OCI-LY7 (cell line): ENCODE measurements at regions of chr7 and their contacts with region 1.

Region 1: DNA sequence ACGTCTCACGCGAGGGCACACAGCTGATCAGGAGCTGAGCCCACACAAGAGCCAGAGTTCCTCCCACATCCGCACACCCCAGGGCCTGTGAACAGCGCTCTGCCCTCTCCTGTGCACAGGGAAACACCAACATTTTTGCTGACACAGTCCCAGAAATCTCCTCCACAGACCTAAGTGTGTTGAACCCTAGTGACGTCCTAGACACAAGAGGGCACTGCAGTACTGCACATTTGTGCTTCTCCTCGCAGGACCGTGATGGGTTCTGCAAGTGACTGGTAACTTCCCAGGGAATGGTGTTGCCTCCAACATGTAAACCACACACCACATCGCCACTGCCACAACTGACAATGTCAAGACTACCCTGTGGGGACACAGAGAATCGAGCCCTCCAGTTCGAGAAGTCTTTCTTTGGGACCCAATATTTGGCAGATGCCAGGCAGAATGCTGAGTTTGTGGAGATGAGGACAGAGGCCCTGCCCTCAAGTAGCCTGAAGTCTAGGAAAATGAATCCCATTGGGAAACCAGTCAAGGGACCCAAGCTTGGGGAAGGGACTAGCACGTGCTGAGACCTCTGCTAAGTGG is 170.3 kb downstream of the PAXIP1 start:
- DNase-seq: peak; percentile 53
- H3K4me3 ChIP-seq: no peak overlapping the region
- H3K27ac ChIP-seq: no peak overlapping the region
- H3K4me1 ChIP-seq: peaks cover 29% of the 10 kb centered on the region
- CTCF ChIP-seq: peak; percentile 60

Region 2: DNA sequence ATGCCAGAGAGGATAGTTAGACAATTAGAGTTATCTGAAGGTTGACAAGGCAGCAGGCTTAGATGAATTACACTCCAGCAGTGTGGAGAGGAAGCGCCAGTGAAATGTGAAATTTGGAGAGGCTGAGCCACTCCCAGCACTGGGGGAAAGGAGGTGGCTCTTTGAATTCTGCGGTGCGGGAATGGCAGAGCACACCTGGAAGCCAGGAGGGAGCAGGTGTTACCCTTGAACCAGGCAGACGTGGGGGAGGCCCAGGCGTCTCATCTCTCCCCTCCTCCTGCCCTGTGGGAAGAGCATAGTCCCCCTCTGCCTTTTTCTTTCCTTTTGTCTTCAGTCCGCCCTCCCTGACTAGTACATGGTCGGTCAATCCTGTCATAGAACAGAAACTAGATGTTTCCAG is 577.3 kb before region 1 on chr7:
- CTCF ChIA-PET with region 1: no interaction called
- POLR2A ChIA-PET with region 1: no interaction called
- intact Hi-C with region 1: no loop called
- DNase-seq: no peak
- H3K4me3 ChIP-seq: no peak overlapping the region
- H3K27ac ChIP-seq: no peak overlapping the region
- H3K4me1 ChIP-seq: no peaks in the 10 kb centered on the region
- CTCF ChIP-seq: no peak

Region 3: DNA sequence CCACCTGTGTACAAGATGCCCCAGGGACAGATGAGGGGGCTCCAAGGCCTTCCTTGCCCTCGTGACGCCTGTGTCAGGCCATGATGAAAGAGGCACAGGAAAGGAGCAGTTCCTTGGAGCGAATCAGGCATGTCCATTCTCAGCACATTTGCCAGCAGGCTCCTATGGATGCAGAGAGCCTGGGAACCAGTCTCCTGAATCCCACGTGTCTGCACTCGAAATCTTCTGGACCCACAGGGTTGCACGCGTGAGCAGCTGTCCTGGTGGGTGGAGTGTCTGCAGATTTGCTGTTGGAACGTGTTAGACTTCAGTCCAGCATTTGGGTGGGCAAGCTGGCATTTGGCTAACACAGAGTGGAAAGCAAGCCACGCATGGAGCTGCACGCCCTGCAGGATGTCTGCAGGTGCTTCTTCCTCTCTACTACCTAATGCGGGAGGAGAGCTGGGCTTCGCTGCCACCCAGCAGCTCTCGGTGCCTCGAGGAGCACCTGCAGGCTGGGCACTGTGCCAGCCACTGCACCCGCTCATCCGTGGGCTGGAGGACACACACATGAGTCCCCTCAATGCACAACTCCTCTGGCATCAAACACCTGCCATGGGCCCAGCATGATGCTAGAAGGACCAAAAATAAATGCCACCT is 29.6 kb after region 1 on chr7:
- CTCF ChIA-PET with region 1: no interaction called
- POLR2A ChIA-PET with region 1: interaction called, 4 read pairs
- intact Hi-C with region 1: loop called (anchors 2 kb)
- DNase-seq: peak; percentile 18
- H3K4me3 ChIP-seq: no peak overlapping the region
- H3K27ac ChIP-seq: no peak overlapping the region
- H3K4me1 ChIP-seq: no peaks in the 10 kb centered on the region
- CTCF ChIP-seq: no peak

Region 4: DNA sequence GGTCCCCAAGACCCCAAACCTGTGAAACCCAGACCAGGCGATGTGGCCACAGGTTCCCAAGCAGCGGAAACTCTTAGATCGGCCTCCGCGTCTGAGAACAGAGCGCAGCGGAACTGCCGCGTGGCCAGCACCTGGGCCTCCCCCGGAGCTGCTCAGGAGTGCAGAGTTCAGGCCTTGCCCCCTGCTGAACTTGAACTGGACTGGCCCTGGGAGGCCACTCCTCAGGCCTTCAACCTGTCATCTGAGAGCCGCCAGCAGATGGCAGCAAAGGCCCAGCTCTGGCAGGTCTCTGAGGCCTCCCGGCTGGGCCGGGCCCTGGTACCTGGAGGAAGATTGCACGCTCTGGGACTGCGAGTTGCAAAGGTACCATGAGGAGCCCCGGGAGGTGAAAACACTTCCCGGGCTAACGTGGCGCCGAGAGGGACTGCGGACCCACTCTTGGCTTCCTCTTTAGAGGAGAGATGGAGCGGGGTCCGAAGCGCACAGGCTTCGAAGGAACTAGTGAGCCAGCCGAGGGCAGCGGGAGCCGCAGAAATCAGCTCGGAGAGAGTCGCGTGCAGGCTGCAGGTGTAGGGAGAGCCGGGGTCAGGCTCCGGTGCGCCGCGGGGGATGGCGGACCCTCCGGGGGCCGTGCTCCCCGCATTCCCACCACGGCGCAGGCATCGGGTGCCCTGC is 81.1 kb after region 1 on chr7:
- CTCF ChIA-PET with region 1: no interaction called
- POLR2A ChIA-PET with region 1: interaction called, 3 read pairs
- intact Hi-C with region 1: loop called (anchors 1 kb)
- DNase-seq: peak; percentile 67
- H3K4me3 ChIP-seq: no peak overlapping the region
- H3K27ac ChIP-seq: no peak overlapping the region
- H3K4me1 ChIP-seq: no peaks in the 10 kb centered on the region
- CTCF ChIP-seq: peak; percentile 85

Region 5: DNA sequence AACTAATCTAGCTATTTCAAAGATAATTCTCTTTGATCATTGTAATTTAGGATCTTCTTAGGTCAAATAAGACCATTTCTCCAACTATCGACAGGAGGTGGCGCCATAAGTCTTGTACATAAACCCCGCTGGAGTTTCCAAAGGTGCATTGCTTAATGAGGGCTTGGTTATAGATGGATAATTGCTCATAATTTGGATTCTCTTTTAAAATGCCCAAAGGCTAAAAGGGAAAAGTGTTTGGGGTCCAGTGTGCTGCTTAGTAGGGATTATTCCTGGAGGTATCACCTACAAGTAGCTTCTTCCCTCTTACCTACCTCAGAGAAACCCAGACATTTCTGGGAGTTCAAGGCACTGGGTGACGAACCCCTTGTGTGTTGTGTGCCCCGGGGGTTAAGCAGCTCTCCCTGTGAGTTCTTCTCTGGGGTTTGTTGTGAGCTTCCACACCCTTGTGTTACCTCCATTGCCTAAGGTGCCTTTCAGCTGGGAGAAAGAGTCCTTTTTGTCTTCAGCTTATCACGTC is 95.0 kb after region 1 on chr7:
- CTCF ChIA-PET with region 1: no interaction called
- POLR2A ChIA-PET with region 1: interaction called, 3 read pairs
- intact Hi-C with region 1: loop called (anchors 2 kb)
- DNase-seq: peak; percentile 91
- H3K4me3 ChIP-seq: peak overlapping the region; percentile 76
- H3K27ac ChIP-seq: peak overlapping the region; percentile 33
- H3K4me1 ChIP-seq: peaks cover 10% of the 10 kb centered on the region
- CTCF ChIP-seq: peak; percentile 94

Region 6: DNA sequence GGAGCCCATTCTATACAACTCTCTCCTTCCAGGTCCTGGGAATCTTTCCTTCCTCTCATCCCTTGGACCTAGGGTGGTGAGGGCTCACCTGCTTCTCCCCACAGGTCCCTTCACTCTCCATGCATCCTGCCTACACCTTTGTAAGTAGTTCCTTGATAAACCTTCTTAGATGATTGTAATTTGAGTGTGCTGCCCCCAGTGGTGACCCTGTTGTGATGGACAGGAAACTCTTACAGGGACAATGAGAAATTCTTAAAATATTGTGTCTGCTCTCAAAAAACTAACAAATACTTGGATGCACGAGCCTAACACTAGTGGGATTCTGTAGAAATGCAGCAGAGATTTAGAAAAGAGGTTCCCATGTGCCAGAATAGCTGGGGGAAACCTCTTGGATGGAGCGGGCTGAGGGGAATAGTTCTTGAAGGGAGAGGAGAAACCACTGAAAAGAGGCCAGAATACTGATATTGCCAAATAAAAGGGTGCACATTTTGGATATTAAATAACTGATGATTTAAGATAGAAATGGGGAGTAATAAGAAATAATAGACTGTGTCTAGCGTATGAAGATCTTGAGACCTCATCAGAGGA is 177.0 kb after region 1 on chr7:
- CTCF ChIA-PET with region 1: no interaction called
- POLR2A ChIA-PET with region 1: no interaction called
- intact Hi-C with region 1: loop called (anchors 5 kb)
- DNase-seq: peak; percentile 47
- H3K4me3 ChIP-seq: no peak overlapping the region
- H3K27ac ChIP-seq: no peak overlapping the region
- H3K4me1 ChIP-seq: peaks cover 8% of the 10 kb centered on the region
- CTCF ChIP-seq: peak; percentile 82

Region 7: DNA sequence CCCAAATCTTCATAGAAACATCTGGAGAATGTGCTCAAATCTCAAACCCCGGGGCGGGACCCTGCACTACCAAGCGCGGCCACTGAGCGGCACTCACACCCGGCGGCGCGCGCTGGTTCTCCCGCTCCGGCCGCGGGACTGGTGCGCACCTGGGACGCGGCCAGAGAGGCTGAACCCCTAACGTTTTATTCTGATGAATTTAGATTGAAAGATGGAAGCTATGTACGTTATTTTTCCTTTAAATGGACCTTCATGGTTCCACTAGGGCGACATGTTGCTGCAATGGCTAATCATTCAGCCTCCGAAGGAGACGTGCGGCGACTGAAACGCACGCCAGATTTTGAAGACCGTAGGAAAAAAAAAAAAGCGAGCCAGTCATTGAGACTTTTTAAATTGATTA is 358.0 kb after region 1 on chr7:
- CTCF ChIA-PET with region 1: no interaction called
- POLR2A ChIA-PET with region 1: no interaction called
- intact Hi-C with region 1: loop called (anchors 5 kb)
- DNase-seq: peak; percentile 44
- H3K4me3 ChIP-seq: no peak overlapping the region
- H3K27ac ChIP-seq: no peak overlapping the region
- H3K4me1 ChIP-seq: no peaks in the 10 kb centered on the region
- CTCF ChIP-seq: peak; percentile 86

Region 8: GRCh38 chr7:155344600-155345433 is 512.2 kb after region 1 on chr7:
- CTCF ChIA-PET with region 1: no interaction called
- POLR2A ChIA-PET with region 1: no interaction called
- intact Hi-C with region 1: loop called (anchors 2 kb)
- DNase-seq: peak; percentile 69
- H3K4me3 ChIP-seq: peak overlapping the region; percentile 69
- H3K27ac ChIP-seq: no peak overlapping the region
- H3K4me1 ChIP-seq: no peaks in the 10 kb centered on the region
- CTCF ChIP-seq: peak; percentile 85